G401 (cell line): ENCODE measurements at regions of chr7 and their contacts with region 1.

Region 1: DNA sequence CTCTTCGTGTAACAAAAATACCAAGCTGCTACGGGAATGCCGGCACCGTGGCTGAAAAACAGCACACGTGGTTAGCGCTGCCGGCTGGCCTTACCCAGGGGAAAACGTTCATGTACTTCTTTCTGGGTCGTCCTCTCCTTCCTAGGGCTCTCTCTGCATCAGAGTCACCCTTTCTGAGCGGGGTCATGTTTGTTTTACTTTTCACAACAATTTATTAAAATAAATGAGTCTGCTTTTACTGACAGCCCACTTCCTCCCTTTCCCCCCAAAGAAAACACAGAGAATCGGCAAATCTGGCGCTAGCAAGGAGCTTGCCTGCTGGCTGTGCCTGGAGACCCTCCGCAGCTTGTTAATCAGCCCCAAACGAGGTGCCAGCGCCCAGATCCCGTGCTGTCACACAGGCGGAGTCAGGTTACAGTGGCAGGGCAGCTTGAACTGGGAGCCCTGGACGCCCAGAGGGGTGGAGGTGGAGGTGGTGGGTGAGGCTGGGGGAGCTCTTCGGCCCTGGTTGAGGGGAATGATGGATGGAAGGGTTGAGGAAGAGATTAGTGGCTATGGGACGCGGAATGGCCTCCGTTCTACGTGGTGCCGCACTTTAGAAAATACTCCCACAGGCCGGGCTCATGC is 162.2 kb upstream of the TNS3 start:
- DNase-seq: no peak

Region 2: GRCh38 chr7:47795631-47796030 is 51.6 kb after region 1 on chr7:
- in situ Hi-C with region 1: loop called (anchors 5 kb)
- DNase-seq: no peak

Region 3: GRCh38 chr7:47806701-47807103 is 62.6 kb after region 1 on chr7:
- in situ Hi-C with region 1: no loop called
- DNase-seq: no peak